ENCODE measurements at regions of chr10 and their contacts with region 1.

Region 1: GRCh38 chr10:33155720-33156638 is 178.5 kb downstream of the NRP1 start:
- DNase-seq: peak; percentile 89 to 98
- ATAC-seq: peak; percentile 95
- H3K4me3 ChIP-seq: no peak overlapping the region; the same call in 2 of the 3 replicates
- H3K27ac ChIP-seq: peak overlapping the region; percentile 87 to 89
- H3K4me1 ChIP-seq: peaks cover 27% of the 10 kb centered on the region
- CTCF ChIP-seq: peak; percentile 94
- EP300 ChIP-seq: peak; percentile 100
- POLR2A ChIP-seq: no peak
- RAD21 ChIP-seq: peak; percentile 98 to 99

Region 2: GRCh38 chr10:33025039-33025438 is 130.9 kb before region 1 on chr10:
- CTCF ChIA-PET with region 1: interaction called, 17 read pairs
- POLR2A ChIA-PET with region 1: no interaction called
- DNase-seq: no peak
- ATAC-seq: no peak
- H3K4me3 ChIP-seq: no peak overlapping the region
- H3K27ac ChIP-seq: peak overlapping the region in 1 of 2 experiments; percentile 11; a peak in 1 of 6 replicates
- H3K4me1 ChIP-seq: no peaks in the 10 kb centered on the region
- CTCF ChIP-seq: no peak
- EP300 ChIP-seq: no peak
- POLR2A ChIP-seq: no peak
- RAD21 ChIP-seq: no peak

Region 3: DNA sequence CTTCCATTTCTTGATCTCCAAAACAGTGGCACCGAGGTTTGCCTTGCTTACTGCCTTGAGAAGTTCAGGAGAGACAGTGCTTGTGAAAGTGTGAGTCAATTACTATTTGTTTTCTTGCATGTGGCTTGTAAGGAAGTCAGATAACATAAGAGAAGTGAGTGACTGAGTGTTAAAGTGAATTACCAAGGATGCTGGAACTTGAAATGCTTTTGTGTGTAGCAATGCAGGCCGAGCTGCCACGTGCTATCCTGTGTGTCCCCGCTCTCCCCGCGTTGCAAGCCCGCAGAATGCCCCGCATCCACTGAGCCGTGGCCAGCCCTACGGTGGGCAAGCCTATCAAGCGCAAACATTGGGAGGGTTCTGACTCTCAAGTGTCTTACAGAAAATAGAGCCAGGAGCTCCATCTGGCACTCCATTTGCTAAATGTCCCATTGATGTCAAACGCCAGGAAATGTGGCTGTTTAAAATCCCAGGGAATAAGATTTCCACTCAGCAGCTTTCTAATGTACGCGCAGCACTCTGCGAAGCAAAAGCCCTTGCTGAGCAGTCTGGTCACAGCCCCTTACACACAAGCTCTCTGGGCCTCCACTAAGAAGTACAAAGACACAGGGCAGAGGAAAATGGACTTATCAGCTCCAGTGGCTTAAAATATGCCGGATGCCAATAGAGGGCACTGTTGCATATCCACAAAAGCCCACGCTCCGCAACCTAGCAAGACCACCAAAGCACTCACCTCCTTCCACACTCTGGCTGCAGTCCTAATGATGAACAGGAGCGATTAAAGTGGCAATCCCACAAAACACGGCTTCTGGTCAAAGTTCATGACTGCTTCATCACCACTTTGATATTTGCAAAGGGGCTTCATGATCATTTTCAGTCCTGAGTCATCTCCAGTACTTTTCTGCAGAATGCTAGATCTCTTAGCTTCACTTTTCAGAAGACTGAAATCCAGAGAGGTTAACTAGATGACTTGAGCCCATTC is 40.0 kb before region 1 on chr10:
- CTCF ChIA-PET with region 1: interaction called, 25 read pairs
- POLR2A ChIA-PET with region 1: no interaction called
- DNase-seq: peak in 1 of 2 experiments; percentile 67
- ATAC-seq: peak; percentile 67 to 82; a peak in 5 of 6 replicates
- H3K4me3 ChIP-seq: no peak overlapping the region
- H3K27ac ChIP-seq: peak overlapping the region; percentile 68 to 84
- H3K4me1 ChIP-seq: peaks cover 38% of the 10 kb centered on the region
- CTCF ChIP-seq: peak; percentile 64
- EP300 ChIP-seq: no peak
- POLR2A ChIP-seq: no peak
- RAD21 ChIP-seq: peak; percentile 58 to 69

Region 4: DNA sequence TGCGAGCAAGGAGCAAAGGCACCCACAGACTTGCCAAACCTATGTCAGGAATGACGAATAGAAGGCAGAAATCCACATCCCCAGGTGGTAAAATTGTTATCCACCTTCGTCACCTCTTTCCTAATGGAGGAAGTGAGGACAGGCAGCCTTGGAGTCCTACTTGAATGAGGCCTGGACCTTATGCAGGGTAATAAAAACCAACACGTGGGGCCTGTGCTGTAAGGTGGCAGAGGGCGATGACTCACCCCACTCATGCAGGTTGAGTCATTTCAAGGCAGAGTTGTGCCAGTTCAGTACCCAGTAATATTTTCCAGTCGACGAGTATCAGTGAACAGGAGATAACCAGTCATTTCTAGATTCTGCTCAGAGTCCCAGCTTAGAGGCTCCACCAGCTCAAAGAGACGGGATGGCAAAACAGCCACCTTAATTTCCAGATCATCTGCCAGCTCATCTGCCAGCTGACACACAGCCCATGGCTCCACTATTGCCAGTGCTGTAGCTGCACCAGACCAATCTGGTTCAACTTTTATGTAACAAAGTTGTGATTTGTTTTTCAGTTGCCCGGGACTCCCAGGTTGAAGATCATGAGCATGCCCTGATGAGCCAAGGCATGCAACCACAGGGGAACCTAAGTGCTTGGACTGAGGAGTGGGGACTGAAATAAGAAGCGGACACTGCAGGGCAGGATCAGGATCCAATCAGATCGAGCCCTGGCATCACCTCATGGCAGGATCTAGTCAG is 21.8 kb before region 1 on chr10:
- CTCF ChIA-PET with region 1: interaction called, 107 read pairs
- POLR2A ChIA-PET with region 1: no interaction called
- DNase-seq: peak; percentile 78 to 97
- ATAC-seq: peak; percentile 83 to 92
- H3K4me3 ChIP-seq: no peak overlapping the region
- H3K27ac ChIP-seq: peak overlapping the region; percentile 84 to 95
- H3K4me1 ChIP-seq: peaks cover 74% of the 10 kb centered on the region
- CTCF ChIP-seq: no peak
- EP300 ChIP-seq: peak; percentile 97 to 98; a peak in 4 of 5 replicates
- POLR2A ChIP-seq: no peak
- RAD21 ChIP-seq: peak; percentile 27 to 61; a peak in 4 of 5 replicates